Testis (tissue), 5 donors: ENCODE measurements at regions of chr5 and their contacts with region 1.

Region 1: DNA sequence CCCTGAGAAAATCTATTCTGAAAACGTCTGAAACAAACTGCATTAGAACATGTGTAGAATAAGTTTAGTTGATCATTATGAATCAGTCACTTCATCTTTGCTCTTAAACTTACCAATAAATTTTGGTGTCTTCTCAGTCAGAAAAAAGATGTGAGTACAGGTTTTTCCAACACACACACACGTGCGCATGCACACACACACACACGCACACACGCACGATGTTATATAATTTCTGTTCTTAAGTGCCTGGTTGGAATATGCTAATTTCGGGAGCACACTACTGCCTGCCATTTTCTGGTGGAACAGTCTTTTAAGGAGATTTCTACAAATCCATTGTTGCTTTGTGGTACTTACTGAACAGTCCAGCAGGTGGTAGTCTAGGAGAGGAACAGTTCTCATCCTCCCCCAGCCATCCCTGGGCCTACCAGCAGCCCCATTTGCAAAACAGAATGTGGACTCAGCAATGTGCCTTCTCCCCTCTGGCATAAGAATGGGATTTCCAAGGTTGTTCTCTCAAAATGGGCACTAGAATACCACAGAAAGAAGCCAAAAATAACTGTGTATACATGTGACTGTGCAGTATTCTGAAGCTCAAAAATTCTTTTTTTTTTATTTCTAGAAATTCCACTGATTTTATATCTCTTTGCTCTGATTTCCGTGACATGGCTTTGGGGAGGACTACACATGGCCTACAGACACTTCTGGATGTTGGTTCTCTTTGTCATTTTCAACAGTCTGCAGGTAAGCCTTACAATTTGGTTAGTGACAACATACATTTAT is 281.3 kb downstream of the ARRDC3 start:
- DNase-seq: peak; percentile 83
- H3K4me3 ChIP-seq: no peak overlapping the region
- H3K27ac ChIP-seq: no peak overlapping the region
- H3K4me1 ChIP-seq: peaks cover 3% of the 10 kb centered on the region
- H3K27me3 ChIP-seq: no peaks in the 10 kb centered on the region
- CTCF ChIP-seq: peak; percentile 66 to 83 (median 78)
- POLR2A ChIP-seq: no peak

Region 2: GRCh38 chr5:90932052-90932699 is 169.6 kb before region 1 on chr5:
- intact Hi-C with region 1: loop called (anchors 10 kb)
- DNase-seq: peak; percentile 61
- H3K4me3 ChIP-seq: no peak overlapping the region
- H3K27ac ChIP-seq: no peak overlapping the region
- H3K4me1 ChIP-seq: no peaks in the 10 kb centered on the region
- H3K27me3 ChIP-seq: no peaks in the 10 kb centered on the region
- CTCF ChIP-seq: peak; percentile 32 to 76 (median 71)
- POLR2A ChIP-seq: no peak

Region 3: GRCh38 chr5:91383027-91383955 is 281.5 kb after region 1 on chr5 and contains the start of gene ARRDC3:
- intact Hi-C with region 1: loop called (anchors 2 kb)
- DNase-seq: peak; percentile 98
- H3K4me3 ChIP-seq: peak within 1 kb of the TSS; percentile 75 to 90
- H3K27ac ChIP-seq: peak within 1 kb of the TSS; percentile 99 to 100
- H3K4me1 ChIP-seq: peaks cover 10% of the 10 kb centered on the region
- H3K27me3 ChIP-seq: no peaks in the 10 kb centered on the region
- CTCF ChIP-seq: no peak
- POLR2A ChIP-seq: peak; percentile 94
- total RNA-seq, gene ARRDC3: 47.6 to 53.4 TPM